Transverse colon (tissue), 4 donors: ENCODE measurements at regions of chr1 and their contacts with region 1.

Region 1: GRCh38 chr1:227946624-227947385 is 927 bp downstream of the WNT9A start:
- DNase-seq: peak; percentile 84
- H3K4me3 ChIP-seq: peak overlapping the region; percentile 36 to 58 (median 49)
- H3K27ac ChIP-seq: peak overlapping the region; percentile 87 to 94 (median 88)
- H3K4me1 ChIP-seq: peaks cover 22 to 61% (median 41%) of the 10 kb centered on the region in 4 donors
- H3K27me3 ChIP-seq: peaks cover 28% of the 10 kb centered on the region
- CTCF ChIP-seq: peak; percentile 70 to 87 (median 75)
- EP300 ChIP-seq: no peak
- POLR2A ChIP-seq: no peak

Region 2: GRCh38 chr1:227489572-227489971 is 457.2 kb before region 1 on chr1:
- in situ Hi-C with region 1: loop called in 2 of 4 experiments (anchors 10 kb)
- intact Hi-C with region 1: loop called (anchors 10 kb)
- DNase-seq: no peak
- H3K4me3 ChIP-seq: no peak overlapping the region
- H3K27ac ChIP-seq: no peak overlapping the region
- H3K4me1 ChIP-seq: no peaks in the 10 kb centered on the region
- H3K27me3 ChIP-seq: no peaks in the 10 kb centered on the region
- CTCF ChIP-seq: no peak
- EP300 ChIP-seq: no peak
- POLR2A ChIP-seq: no peak

Region 3: DNA sequence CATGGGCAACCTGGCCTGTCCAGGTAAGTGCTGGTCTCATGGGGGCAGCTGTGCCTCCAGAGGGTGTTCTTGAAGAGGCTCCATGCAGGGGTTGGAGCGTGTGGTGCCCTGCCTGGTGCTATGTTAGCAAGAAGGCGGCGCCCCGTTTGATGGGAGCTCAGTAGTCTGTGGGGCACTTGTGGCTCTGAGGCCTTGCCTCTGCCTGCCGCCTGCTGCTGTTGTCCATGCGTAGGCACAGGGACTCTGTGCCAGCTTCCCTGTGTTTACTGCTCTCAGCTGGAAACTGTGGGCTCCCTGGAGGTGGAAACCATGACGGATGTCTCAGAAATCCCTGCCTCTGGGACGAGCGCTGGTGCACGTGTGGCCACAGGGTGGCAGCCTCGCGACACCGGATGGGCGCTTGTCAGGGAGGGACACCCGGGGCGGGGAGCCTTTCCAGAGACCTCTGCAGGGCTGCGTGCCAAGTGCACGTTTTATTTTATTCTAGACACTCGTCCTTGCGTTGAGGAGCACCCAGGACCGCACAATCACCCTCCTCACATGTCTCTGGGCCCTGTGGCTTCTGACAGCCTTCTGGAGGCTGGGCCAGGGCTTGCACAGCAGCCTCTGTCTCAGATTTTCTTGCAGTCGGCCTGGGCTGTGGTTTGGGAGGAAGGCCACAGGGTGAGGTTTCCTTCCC is 184.4 kb before region 1 on chr1:
- in situ Hi-C with region 1: loop called in 2 of 4 experiments (anchors 10 to 25 kb)
- intact Hi-C with region 1: loop called (anchors 1 kb)
- DNase-seq: peak; percentile 90
- H3K4me3 ChIP-seq: no peak overlapping the region
- H3K27ac ChIP-seq: peak overlapping the region in 3 of 4 donors; percentile 53 to 80 (median 62)
- H3K4me1 ChIP-seq: peaks cover 13 to 30% (median 25%) of the 10 kb centered on the region in 4 donors
- H3K27me3 ChIP-seq: no peaks in the 10 kb centered on the region
- CTCF ChIP-seq: peak; percentile 85 to 89 (median 87)
- EP300 ChIP-seq: no peak
- POLR2A ChIP-seq: no peak

Region 4: DNA sequence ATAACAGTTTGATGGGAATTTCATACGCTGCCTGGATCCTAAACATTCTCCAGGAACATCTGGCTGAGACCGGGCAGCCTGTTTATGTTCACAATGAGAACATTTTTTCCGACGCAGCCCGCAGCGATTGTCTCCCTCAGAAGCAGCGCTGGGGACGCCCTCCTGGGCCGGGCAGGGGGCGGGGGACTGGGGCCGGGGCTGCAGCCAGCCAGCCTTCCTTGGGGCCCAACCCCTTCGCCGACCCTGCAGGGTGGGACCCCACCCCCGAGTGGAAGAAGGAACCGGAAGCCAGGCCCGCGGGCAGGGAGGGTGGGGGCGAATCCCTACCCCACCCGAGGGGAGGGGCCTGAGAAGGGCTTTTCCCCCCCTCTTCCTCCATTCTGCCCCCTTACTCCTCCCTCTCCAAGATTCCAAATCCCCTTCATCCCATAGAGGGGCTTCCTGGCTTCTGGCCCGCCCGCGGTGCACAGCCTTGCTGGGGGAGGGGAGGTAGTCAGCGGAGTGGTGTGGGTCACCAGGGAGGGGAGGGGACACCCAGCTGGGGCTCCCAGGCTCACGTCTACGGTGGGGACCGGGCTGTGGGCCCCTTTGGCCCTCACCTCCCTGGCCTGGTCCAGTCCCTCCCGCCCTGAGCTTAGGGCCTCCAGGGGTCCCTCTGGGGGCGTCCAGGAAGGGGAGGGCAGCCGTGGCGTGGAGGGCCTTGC is 59.7 kb before region 1 on chr1:
- in situ Hi-C with region 1: no loop called
- intact Hi-C with region 1: loop called (anchors 10 kb)
- DNase-seq: peak; percentile 62
- H3K4me3 ChIP-seq: peak overlapping the region; percentile 35 to 57 (median 41)
- H3K27ac ChIP-seq: peak overlapping the region; percentile 88 to 96 (median 90)
- H3K4me1 ChIP-seq: peaks cover 12 to 24% (median 20%) of the 10 kb centered on the region in 4 donors
- H3K27me3 ChIP-seq: no peaks in the 10 kb centered on the region
- CTCF ChIP-seq: no peak
- EP300 ChIP-seq: no peak
- POLR2A ChIP-seq: no peak

Region 5: DNA sequence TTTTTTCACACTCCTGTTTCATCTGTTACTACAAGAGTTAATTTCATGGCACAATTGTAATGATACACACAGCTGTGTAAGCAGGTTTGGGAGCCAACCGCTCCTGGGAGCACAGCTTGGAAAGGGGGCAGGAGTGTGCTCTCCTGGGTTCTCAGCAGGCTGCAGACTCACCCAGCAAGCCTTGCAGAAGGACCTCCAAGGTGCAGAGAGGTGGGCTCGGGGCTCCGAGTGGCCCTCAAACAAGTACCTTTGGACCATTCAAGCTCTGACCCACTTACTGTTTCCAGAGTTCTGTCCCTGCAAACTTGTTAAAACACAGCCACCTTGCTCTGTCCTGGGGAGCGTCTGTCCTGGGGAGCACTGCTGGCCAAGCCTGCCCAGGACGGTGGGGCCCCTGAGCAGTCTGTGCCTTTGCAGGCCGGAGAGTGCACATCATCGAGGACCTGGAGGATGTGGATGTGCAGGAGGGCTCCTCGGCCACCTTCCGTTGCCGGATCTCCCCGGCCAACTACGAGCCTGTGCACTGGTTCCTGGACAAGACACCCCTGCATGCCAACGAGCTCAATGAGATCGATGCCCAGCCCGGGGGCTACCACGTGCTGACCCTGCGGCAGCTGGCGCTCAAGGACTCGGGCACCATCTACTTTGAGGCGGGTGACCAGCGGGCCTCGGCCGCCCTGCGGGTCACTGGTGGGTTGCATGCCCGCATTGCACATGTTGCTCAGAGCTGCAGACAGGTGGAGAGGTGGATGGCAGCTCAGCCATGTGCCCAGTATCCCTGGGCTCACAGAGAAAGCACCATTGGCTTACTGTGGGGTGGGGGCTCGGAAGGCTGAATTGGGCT is 339.1 kb after region 1 on chr1:
- in situ Hi-C with region 1: no loop called
- intact Hi-C with region 1: no loop called
- DNase-seq: peak; percentile 6
- H3K4me3 ChIP-seq: no peak overlapping the region
- H3K27ac ChIP-seq: no peak overlapping the region
- H3K4me1 ChIP-seq: no peaks in the 10 kb centered on the region
- H3K27me3 ChIP-seq: no peaks in the 10 kb centered on the region
- CTCF ChIP-seq: no peak
- EP300 ChIP-seq: no peak
- POLR2A ChIP-seq: no peak